Heart left ventricle (tissue), 16 donors: ENCODE measurements at regions of chr11 and their contacts with region 1.

Region 1: DNA sequence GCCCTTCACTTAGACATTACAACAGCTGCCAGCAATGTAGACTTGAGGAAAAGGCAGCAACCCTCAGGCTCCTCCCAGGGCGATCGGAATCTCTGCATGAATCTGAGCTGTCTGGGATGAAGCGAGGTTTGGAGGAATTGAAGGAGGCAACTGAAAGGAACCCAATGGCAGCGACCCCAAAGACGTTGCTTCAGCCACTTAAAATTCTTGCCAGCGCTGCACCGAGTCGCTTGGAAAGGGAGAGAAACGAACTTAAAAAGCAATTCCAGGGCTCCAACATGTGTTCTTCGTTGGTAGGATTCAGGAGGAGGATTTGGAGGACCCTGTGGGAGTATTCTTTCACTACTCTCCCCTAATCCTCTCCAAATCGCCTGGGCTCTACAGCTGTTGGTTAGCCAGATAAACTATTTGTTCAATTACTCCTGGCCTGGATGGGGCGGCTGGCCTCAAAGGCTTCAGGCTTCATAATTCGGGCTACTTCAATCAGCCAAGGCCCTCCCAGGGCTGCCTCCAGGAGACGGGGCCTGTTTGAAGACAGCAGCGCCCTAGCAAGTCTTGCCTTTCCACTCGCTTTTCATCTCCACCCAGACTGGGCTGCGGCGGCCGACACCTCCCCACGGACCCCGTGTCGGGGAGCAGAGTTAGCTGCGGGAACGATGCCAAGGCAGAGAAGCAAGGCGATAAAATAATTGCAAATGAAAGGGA is 72.4 kb upstream of the TMEM45B start:
- DNase-seq: no peak
- ATAC-seq: peak in 3 of 4 donors; percentile 24 to 62 (median 42)
- H3K4me3 ChIP-seq: peak overlapping the region in 5 of 12 donors; percentile 5 to 24 (median 16)
- H3K27ac ChIP-seq: peak overlapping the region in 1 of 12 donors; percentile 29
- H3K4me1 ChIP-seq: no peaks in the 10 kb centered on the region
- H3K27me3 ChIP-seq: peaks cover 0 to 13% (median 4%) of the 10 kb centered on the region in 9 donors
- CTCF ChIP-seq: no peak
- POLR2A ChIP-seq: no peak

Region 2: GRCh38 chr11:128039140-128040021 is 1703.9 kb before region 1 on chr11:
- intact Hi-C with region 1: loop called in 1 of 10 experiments (anchors 10 kb)
- DNase-seq: peak in 4 of 5 donors; percentile 23 to 74 (median 32)
- ATAC-seq: peak in 3 of 4 donors; percentile 66 to 92 (median 78)
- H3K4me3 ChIP-seq: peak overlapping the region in 1 of 12 donors; percentile 19
- H3K27ac ChIP-seq: peak overlapping the region in 1 of 12 donors; percentile 72
- H3K4me1 ChIP-seq: peaks cover 0 to 39% (median 0%) of the 10 kb centered on the region in 12 donors
- H3K27me3 ChIP-seq: peaks cover 0 to 15% (median 0%) of the 10 kb centered on the region in 9 donors
- CTCF ChIP-seq: peak in 2 of 12 donors; percentile 7 to 16
- POLR2A ChIP-seq: no peak

Region 3: GRCh38 chr11:129117595-129118350 is 625.5 kb before region 1 on chr11:
- intact Hi-C with region 1: loop called in 2 of 10 experiments (anchors 5 to 10 kb)
- DNase-seq: peak in 1 of 5 donors; percentile 27
- ATAC-seq: peak in 2 of 4 donors; percentile 59 to 61
- H3K4me3 ChIP-seq: no peak overlapping the region
- H3K27ac ChIP-seq: no peak overlapping the region
- H3K4me1 ChIP-seq: peaks cover 0 to 3% (median 0%) of the 10 kb centered on the region in 12 donors
- H3K27me3 ChIP-seq: no peaks in the 10 kb centered on the region
- CTCF ChIP-seq: peak; percentile 79 to 94 (median 86)
- POLR2A ChIP-seq: no peak

Region 4: DNA sequence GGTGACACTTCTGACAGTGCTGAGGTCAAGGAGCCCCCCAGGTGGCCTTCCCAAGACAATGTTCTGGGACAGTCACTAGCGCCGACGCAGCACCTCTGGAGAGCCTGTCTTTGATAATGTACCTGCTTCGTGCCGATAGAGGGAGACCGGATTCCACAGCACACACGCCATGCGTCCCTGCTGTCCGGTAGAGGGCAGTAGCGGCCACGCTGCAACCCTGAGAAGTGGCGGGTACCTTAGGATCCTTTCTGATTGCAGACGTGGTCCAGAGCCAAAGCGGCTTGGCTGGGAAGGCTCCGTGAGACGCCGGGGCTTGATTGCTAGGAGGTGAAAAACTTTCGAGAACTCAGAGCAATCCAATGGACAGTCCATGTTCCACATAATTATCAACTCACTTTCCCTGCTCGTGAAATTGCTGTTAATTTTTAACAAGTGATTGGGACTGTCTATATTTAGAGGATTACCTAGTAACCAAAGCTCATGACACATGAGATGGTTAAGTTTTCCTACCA is 379.1 kb before region 1 on chr11:
- intact Hi-C with region 1: loop called in 2 of 10 experiments (anchors 2 to 10 kb)
- DNase-seq: peak; percentile 65 to 86 (median 78)
- ATAC-seq: peak; percentile 93 to 98 (median 96)
- H3K4me3 ChIP-seq: peak overlapping the region in 1 of 12 donors; percentile 16
- H3K27ac ChIP-seq: no peak overlapping the region
- H3K4me1 ChIP-seq: peaks cover 0 to 6% (median 0%) of the 10 kb centered on the region in 12 donors
- H3K27me3 ChIP-seq: peaks cover 0 to 75% (median 18%) of the 10 kb centered on the region in 9 donors
- CTCF ChIP-seq: peak; percentile 85 to 98 (median 94)
- POLR2A ChIP-seq: no peak

Region 5: DNA sequence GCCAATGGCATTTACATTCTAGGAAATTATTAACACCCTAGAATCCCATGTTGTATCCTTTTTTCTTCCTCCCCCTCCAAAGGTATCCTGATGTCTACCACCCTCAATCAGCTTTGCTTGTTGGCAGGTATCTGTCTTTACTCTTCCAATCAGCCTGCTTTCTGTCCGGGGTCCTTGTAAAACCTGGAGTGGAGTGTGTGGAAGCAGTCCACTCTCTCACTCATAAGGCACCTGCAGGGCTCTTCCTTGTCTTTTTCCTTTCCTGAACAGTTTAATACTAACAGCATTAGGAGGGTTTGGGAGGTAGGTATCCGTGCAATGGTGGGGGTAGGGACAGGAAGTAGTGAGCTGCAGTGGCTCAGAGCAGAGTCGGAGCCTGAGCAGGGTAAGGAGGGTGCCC is 174.3 kb before region 1 on chr11:
- intact Hi-C with region 1: no loop called
- DNase-seq: no peak
- ATAC-seq: no peak
- H3K4me3 ChIP-seq: no peak overlapping the region
- H3K27ac ChIP-seq: no peak overlapping the region
- H3K4me1 ChIP-seq: no peaks in the 10 kb centered on the region
- H3K27me3 ChIP-seq: peaks cover 0 to 3% (median 0%) of the 10 kb centered on the region in 9 donors
- CTCF ChIP-seq: no peak
- POLR2A ChIP-seq: no peak

Region 6: DNA sequence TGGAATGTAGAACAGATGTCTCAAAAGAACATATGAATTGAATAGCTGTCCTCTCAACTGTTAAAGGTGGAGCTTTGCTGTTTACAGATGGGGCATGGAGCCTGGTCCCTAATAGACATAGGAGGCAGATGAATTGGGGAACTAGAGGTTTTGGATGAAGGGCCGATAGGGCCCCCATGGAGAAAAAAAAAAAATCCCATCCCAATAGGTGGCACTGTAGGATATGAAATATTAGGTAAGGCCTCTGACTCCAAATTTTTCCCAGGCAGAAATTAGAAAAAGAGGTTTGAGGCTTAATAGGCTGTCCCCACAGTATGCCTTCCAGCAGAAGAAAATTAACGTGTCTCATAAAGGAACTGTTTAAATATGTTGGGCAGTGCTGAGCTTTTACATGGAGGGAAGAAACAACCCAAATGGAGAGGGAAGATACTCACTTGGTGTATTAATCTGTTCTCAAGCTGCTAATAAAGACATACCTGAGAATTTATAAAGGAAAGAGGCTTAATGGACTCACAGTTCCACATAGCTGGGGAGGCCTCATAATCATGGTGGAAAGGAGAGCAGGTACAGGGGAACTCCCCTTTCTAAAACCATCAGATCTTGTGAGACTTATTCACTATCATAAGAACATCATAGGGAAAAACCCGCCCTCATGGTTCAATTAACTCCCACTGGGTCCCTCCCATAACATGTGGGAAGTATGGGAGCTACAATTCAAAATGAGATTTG is 42.3 kb after region 1 on chr11:
- intact Hi-C with region 1: no loop called
- DNase-seq: no peak
- ATAC-seq: no peak
- H3K4me3 ChIP-seq: no peak overlapping the region
- H3K27ac ChIP-seq: no peak overlapping the region
- H3K4me1 ChIP-seq: peaks cover 0 to 6% (median 0%) of the 10 kb centered on the region in 12 donors
- H3K27me3 ChIP-seq: peaks cover 0 to 11% (median 0%) of the 10 kb centered on the region in 9 donors
- CTCF ChIP-seq: peak in 3 of 12 donors; percentile 16 to 27 (median 26)
- POLR2A ChIP-seq: no peak